ENCODE measurements at regions of chr2 and their contacts with region 1.

Region 1: DNA sequence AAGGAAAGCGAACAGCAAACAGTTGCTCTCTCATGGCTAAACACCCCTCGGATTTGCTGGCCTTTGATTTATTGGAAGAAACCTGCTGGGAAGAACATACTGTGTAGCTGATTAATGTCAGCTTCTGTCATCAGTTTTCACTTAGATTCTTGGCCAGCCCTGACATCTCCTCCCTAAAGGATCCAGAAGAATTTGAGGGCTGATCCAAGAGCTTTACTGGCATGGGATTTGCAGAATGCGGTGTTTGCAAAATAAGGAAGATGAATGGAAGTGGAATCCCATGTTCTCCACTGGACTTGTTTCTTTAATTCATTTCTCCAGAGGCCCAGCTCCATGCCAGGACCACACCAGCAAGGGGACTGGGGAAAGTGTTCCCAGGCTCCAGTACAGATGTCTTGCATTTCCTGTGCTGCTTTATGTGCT is 80.5 kb downstream of the RDH14 start:
- DNase-seq: peak; percentile 84
- H3K4me3 ChIP-seq: no peak overlapping the region
- H3K27ac ChIP-seq: peak overlapping the region in 2 of 4 donors; percentile 23 to 27
- H3K4me1 ChIP-seq: peaks cover 0 to 15% (median 8%) of the 10 kb centered on the region in 4 donors
- H3K27me3 ChIP-seq: no peaks in the 10 kb centered on the region
- CTCF ChIP-seq: no peak
- EP300 ChIP-seq: no peak
- POLR2A ChIP-seq: no peak

Region 2: DNA sequence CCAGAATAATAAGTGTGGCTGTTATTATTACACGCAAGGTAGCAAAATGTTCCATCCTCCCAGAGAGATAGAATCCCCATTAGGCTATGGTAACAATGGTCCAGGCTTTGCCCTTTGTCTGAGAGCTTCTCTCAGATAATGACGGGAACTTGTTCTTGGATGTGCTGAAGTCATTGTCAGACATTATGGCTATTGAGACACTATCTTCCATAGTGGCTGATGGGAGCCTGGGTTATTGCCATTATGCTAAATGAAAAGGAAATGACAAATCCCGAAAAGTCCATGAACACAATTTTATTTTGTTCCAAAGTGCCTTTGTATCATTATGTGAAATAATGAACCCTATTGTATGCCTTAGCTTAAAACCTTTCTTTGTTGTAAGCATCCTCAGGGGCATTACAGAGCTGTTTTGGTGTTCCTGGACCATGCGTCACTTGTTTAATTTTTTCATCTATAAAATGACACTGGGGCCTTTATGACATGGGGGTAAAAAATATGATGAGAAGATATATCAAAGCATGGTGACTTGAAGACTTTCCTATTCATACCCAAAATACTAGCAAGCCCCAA is 383.0 kb before region 1 on chr2:
- intact Hi-C with region 1: no loop called
- DNase-seq: no peak
- H3K4me3 ChIP-seq: no peak overlapping the region
- H3K27ac ChIP-seq: no peak overlapping the region
- H3K4me1 ChIP-seq: no peaks in the 10 kb centered on the region
- H3K27me3 ChIP-seq: no peaks in the 10 kb centered on the region
- CTCF ChIP-seq: no peak
- EP300 ChIP-seq: no peak
- POLR2A ChIP-seq: no peak

Region 3: GRCh38 chr2:18445433-18446320 is 34.3 kb before region 1 on chr2:
- intact Hi-C with region 1: loop called (anchors 5 kb)
- DNase-seq: peak; percentile 84
- H3K4me3 ChIP-seq: no peak overlapping the region
- H3K27ac ChIP-seq: peak overlapping the region in 3 of 4 donors; percentile 51 to 61 (median 55)
- H3K4me1 ChIP-seq: peaks cover 0 to 40% (median 26%) of the 10 kb centered on the region in 4 donors
- H3K27me3 ChIP-seq: no peaks in the 10 kb centered on the region
- CTCF ChIP-seq: no peak
- EP300 ChIP-seq: no peak
- POLR2A ChIP-seq: no peak

Measured in sigmoid colon (tissue), 7 donors.